ENCODE measurements at regions of chr16 and their contacts with region 1.

Region 1: DNA sequence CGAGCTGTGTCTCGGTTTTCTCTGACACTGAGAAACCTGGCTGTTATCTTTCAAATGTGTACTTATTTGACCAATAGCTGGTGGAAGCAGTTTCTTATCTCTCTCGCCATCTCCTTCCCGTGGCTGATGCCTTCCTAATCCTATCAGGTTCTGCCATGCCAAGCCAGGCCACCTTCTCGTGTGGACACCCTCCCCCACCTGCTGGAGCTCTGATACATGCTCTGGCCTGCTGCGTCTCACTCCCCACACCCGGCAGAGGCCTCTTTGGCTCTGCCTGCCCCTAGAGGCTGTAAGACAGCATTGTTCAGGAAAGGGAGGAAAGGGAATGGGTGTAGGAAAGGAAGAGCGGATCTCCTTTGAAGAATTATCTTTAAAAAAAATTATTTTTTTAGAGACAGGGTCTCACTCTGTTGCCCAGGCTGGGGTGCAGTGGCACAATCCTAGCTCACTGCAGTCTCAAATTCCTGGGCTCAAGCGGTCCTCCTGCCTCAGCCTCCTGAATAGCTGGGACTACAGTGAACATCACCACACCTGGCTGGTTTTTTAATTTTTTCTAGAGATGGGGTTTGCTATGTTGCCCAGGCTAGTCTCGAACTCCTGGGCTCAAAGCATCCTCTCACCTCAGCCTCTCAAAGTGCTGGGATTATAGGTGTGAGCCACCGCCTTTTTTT is 7.5 kb upstream of the ARMC5 start:
- DNase-seq: peak; percentile 77
- H3K4me3 Mint-ChIP-seq: peak overlapping the region; percentile 12
- H3K27ac Mint-ChIP-seq: peak overlapping the region; percentile 94
- H3K4me1 Mint-ChIP-seq: peaks cover 21% of the 10 kb centered on the region
- H3K27me3 Mint-ChIP-seq: no peaks in the 10 kb centered on the region
- CTCF ChIP-seq: peak; percentile 48

Region 2: DNA sequence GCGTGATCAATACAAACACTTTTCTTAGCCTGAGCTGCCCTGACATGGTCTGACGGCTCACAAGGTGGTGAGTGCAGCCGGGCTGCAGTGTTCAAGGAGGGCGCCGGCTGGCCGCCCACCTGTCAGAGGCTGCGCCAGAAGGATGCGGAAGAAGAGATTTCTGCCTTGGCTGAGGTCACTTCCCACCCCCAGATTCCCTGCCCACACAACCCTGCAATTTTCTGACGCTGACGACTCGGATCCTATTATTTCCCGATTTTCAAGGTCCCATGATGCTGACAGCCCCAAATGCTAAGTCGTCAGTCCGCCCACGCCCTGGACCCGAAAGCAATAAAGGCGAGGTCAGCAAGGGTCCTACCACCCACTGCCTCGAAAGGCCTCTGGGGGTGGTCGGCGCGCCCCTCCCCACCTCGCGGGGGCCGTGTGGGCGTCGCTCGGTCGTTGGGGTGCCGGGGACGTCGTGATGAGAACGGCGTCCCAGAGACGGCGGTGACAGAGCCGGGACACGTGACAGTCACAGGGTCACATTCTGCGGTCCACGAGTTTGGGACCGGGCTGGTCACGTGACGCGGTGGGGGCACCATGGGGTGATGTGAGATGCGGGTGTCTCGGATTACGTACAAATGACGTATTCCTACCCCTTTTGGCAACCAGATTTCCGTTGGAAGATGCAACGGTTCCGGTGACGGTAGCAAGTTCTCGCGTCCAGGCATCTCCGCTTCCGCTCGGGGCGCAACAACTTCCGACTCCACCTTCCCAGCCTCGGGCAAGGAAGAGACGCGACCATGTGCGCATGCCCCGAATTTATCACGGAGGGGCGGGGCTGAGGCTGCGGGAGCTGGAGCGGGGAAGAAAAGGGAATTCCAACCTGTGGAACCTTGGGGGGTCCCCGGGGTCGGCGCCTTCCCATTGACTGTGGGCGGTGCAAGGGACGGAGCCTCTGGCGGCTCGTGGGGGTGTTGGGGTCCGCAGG is 418.8 kb before region 1 on chr16 and contains the start of gene STX4:
- CTCF ChIA-PET with region 1: no interaction called
- POLR2A ChIA-PET with region 1: interaction called, 4 read pairs
- intact Hi-C with region 1: loop called (anchors 5 kb)
- DNase-seq: peak; percentile 96
- H3K4me3 Mint-ChIP-seq: peak within 1 kb of the TSS; percentile 91
- H3K27ac Mint-ChIP-seq: peak within 1 kb of the TSS; percentile 84
- H3K4me1 Mint-ChIP-seq: no peaks in the 10 kb centered on the region
- H3K27me3 Mint-ChIP-seq: no peaks in the 10 kb centered on the region
- CTCF ChIP-seq: no peak
- total RNA-seq, gene STX4: 66.7 and 89.2 TPM in 2 replicates

Region 3: DNA sequence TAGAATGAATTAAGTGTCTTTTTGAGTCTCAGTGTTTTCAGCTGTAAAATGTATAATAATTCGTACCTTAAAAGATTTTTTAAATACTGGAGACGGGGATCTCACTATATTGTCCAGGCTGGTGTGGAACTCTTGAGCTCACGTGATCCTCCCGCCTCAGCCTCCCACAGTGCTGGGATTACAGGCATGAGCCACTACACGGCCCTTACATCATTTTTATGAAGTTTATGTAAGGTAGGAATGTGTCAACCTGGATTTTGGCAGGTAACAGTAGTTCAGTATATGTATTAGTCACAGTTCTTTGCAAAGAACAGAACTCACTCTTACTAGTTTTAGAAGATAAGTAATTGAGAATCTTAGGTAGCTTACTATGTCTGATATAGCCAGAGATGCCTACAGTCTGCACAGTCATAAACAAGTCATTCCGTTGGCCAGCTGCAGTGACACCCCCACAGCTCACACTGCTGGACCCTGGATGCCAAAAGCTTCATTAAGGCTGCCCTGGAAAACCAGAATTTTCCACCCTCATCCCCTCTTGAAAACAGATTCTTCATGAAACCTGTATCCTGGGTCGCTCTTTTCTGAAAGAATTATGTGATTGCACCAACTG is 23.1 kb before region 1 on chr16:
- CTCF ChIA-PET with region 1: interaction called, 5 read pairs
- POLR2A ChIA-PET with region 1: interaction called, 27 read pairs
- intact Hi-C with region 1: no loop called
- DNase-seq: peak; percentile 34
- H3K4me3 Mint-ChIP-seq: no peak overlapping the region
- H3K27ac Mint-ChIP-seq: no peak overlapping the region
- H3K4me1 Mint-ChIP-seq: no peaks in the 10 kb centered on the region
- H3K27me3 Mint-ChIP-seq: no peaks in the 10 kb centered on the region
- CTCF ChIP-seq: no peak

Region 4: GRCh38 chr16:31440516-31441184 is 11.2 kb before region 1 on chr16:
- CTCF ChIA-PET with region 1: interaction called, 65 read pairs
- POLR2A ChIA-PET with region 1: interaction called, 29 read pairs
- intact Hi-C with region 1: no loop called
- DNase-seq: no peak
- H3K4me3 Mint-ChIP-seq: no peak overlapping the region
- H3K27ac Mint-ChIP-seq: no peak overlapping the region
- H3K4me1 Mint-ChIP-seq: peaks cover 12% of the 10 kb centered on the region
- H3K27me3 Mint-ChIP-seq: no peaks in the 10 kb centered on the region
- CTCF ChIP-seq: no peak

Region 5: DNA sequence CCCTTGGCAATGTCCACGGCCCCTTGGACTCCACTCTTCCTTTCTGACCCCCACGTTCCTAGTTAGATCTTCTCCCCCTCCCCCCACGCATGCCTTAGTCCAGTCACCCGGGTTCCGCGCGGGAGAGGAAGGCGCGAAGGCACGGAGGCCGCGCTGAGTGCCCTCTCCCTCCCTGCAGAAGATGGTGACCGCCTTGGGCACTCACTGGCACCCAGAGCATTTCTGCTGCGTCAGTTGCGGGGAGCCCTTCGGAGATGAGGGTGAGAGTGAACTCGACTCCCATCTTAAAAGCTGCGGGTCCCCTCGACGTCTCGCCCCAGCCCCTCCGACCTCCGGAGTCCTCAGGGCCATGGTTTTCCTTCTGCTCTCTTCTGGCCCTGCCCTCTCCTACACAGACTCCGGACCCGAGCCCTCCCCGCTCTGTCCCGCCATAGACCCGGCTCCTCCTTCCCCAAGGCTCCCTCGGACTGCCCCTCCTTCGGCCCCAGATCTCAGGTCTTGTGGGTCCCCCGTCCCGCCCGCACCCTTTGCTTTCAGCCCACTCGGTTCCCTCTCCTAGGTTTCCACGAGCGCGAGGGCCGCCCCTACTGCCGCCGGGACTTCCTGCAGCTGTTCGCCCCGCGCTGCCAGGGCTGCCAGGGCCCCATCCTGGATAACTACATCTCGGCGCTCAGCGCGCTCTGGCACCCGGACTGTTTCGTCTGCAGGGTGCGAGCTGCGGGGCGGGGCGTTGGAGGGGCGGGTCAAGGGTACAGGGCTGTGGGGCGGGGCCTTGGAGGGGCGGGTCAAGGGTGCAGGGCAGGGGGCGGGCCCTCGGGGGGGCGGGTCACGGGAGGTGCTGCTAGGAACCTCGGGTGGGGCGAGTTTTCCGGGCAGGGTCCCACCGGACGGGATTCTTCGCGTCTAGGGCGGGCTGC is 24.7 kb after region 1 on chr16:
- CTCF ChIA-PET with region 1: no interaction called
- POLR2A ChIA-PET with region 1: no interaction called
- intact Hi-C with region 1: no loop called
- DNase-seq: no peak
- H3K4me3 Mint-ChIP-seq: no peak overlapping the region
- H3K27ac Mint-ChIP-seq: no peak overlapping the region
- H3K4me1 Mint-ChIP-seq: peaks cover 15% of the 10 kb centered on the region
- H3K27me3 Mint-ChIP-seq: peaks cover 13% of the 10 kb centered on the region
- CTCF ChIP-seq: no peak

Region 6: DNA sequence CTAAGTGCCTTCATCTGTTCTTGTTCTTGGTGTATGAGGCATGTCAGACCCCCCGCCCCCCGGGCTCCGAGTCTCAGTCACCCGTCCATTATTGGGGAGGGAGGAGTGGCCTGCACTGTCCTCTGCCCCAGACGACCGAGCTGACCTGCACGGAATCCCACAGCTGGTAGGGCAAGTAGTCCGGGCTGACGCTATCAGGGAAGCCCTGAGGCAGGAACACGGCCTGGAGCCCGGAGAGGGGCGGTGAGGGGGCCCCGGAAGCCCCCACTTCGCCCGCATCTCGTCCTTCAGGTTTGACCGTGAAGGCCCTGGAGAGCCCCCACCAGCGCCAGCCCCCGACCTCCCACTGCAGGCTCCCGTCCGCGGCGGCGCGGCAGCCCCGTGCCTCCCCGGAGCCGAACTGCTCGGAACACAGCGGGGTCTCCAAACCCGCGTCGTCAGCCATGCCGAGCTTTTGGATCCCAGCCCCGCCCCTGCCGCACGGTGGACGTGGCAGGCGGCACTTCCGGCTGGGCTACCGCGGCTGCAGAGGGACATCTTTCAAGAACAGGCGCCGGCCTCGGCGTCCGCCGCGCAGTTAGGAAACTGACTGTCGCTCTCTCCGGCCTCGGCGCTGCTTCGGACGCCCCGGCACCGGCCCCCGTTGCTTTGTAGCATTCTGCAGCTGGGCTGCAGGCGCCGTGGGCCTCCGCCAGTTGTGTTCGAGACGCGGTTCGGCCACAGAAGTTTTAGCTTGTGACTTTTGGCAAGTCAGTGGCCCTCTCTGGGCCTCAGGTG is 56.3 kb after region 1 on chr16 and contains the start of gene RUSF1:
- CTCF ChIA-PET with region 1: no interaction called
- POLR2A ChIA-PET with region 1: interaction called, 15 read pairs
- intact Hi-C with region 1: no loop called
- DNase-seq: peak; percentile 84
- H3K4me3 Mint-ChIP-seq: peak within 1 kb of the TSS; percentile 88
- H3K27ac Mint-ChIP-seq: peak within 1 kb of the TSS; percentile 98
- H3K4me1 Mint-ChIP-seq: peaks cover 22% of the 10 kb centered on the region
- H3K27me3 Mint-ChIP-seq: no peaks in the 10 kb centered on the region
- CTCF ChIP-seq: no peak
- total RNA-seq, gene RUSF1: 72.0 and 88.8 TPM in 2 replicates

Region 7: DNA sequence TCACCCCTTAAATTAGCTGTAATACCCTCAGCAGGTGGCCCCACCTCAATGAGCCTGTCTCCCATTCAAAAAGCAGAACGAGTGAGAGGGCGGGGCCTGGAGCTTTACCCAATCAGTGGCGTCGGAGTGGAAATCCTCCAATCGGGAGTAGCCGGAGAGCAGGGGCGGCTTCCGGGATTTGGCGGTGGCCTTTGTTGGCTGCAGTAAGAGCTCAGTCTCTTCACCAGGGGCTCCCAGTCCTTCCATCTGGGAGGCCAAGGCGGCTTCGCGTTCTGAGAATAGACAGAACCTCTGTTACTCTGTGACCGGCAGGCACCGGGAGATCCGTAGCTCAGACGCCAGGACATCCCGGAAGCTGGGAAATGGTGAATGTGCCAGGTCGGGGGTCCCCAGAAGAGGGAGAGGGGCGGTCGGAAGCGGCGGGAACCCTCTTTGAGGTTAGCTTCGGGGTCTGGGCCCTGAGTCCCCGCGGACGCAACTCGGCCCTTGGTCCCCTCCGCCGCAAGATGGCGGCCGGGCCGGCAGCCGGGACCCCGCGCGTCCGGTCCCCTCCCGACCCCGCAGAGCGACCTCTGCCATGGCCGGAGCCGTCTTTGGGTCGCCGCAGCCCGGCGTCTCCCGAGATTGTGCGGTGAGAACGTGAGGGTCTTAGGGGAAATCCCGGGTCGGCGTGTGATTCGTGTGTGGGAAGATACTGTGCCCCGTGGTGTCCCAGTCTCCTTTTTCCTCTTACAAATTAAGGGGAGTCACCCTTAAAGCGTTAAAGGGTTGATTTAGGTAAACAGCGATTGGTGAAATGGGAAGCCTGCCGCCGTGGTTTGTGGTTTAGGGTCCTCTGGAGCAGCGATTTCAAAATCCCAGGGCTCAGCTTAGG is 261.5 kb after region 1 on chr16:
- CTCF ChIA-PET with region 1: interaction called, 3 read pairs
- POLR2A ChIA-PET with region 1: interaction called, 10 read pairs
- intact Hi-C with region 1: loop called (anchors 5 kb)
- DNase-seq: peak; percentile 95
- H3K4me3 Mint-ChIP-seq: peak overlapping the region; percentile 96
- H3K27ac Mint-ChIP-seq: peak overlapping the region; percentile 99
- H3K4me1 Mint-ChIP-seq: peaks cover 17% of the 10 kb centered on the region
- H3K27me3 Mint-ChIP-seq: no peaks in the 10 kb centered on the region
- CTCF ChIP-seq: no peak

Region 8: DNA sequence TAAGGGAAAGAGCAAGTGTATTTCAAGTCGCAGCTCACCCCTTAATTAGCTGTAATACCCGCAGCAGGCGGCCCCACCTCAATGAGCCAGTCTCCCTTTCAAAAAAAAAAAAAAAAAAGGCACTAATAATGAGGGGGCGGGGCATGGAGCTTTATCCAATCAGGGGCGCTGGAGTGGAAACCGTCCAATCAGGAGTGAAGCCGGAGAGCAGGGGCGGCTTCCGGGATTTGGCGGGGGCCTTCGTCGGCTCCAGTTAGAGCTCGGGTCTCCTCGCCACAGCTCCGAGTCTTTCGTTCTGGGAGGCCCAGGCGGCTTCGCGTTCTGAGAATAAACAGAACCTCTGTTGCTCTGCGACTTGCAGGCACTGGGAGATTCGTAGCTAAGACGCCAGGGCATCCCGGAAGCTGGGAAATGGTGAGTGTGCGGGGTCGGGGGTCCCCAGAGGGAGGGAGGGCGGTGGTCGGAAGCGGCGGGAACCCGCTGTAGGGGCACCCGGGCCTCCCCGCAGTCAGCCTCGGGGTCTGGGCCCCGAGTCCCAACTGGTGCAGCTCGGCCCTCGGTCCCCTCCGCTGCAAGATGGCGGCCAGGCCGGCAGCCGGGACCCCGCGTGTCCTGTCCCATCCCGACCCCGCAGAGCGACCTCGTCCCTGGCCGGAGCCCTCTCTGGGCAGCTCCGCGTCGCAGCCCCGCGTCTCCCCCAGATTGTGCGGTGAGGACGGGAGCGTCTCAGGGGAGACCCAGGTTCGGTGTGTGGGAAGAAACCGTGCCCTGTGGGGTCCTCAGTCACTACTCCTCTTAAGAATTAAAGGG is 421.9 kb after region 1 on chr16 and contains the start of gene ZNF267:
- CTCF ChIA-PET with region 1: interaction called, 7 read pairs
- POLR2A ChIA-PET with region 1: interaction called, 7 read pairs
- intact Hi-C with region 1: loop called (anchors 2 kb)
- DNase-seq: peak; percentile 96
- H3K4me3 Mint-ChIP-seq: peak within 1 kb of the TSS; percentile 91
- H3K27ac Mint-ChIP-seq: peak within 1 kb of the TSS; percentile 94
- H3K4me1 Mint-ChIP-seq: peaks cover 41% of the 10 kb centered on the region
- H3K27me3 Mint-ChIP-seq: no peaks in the 10 kb centered on the region
- CTCF ChIP-seq: no peak
- total RNA-seq, gene ZNF267: 10.1 and 10.6 TPM in 2 replicates